ENCODE measurements at regions of chr10 and their contacts with region 1.

Region 1: GRCh38 chr10:118670472-118671124 is 75.2 kb upstream of the PRLHR start:
- DNase-seq: no peak
- H3K4me3 ChIP-seq: no peak overlapping the region
- H3K27ac ChIP-seq: no peak overlapping the region
- H3K4me1 ChIP-seq: no peaks in the 10 kb centered on the region
- H3K27me3 ChIP-seq: no peaks in the 10 kb centered on the region
- CTCF ChIP-seq: no peak

Region 2: DNA sequence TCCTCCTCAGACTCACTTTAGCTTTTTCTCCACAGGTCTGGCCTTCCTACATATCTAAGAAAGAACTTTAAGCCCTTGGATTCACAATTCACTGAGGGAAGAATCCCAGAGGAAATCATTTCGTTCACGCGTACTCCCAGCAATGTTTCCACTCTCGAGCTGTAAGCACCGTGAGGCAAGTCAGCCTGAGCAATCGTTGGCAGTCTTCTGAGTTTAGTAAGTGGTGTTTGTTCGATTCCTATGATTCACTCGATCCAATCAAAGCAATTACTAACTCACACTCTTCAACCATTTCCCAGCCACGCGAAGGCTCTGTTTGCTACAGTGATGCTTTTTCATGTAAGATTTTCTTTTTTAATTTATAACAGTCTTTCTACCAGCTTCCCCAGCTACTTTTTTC is 64.9 kb before region 1 on chr10:
- CTCF ChIA-PET with region 1: no interaction called
- POLR2A ChIA-PET with region 1: no interaction called
- intact Hi-C with region 1: loop called (anchors 2 kb)
- DNase-seq: no peak
- H3K4me3 ChIP-seq: no peak overlapping the region
- H3K27ac ChIP-seq: no peak overlapping the region
- H3K4me1 ChIP-seq: no peaks in the 10 kb centered on the region
- H3K27me3 ChIP-seq: peaks cover 51% of the 10 kb centered on the region
- CTCF ChIP-seq: no peak

Measured in PC-9 (cell line).